Activated naive CD4-positive, alpha-beta T cell treated with anti-CD3 and anti-CD28 coated beads for 36 hours (primary cell): ENCODE measurements at regions of chr7 and their contacts with region 1.

Region 1: GRCh38 chr7:66413379-66414114 is 208.4 kb downstream of the TPST1 start:
- DNase-seq: peak; percentile 83
- H3K4me3 Mint-ChIP-seq: peak overlapping the region; percentile 66
- H3K27ac Mint-ChIP-seq: no peak overlapping the region
- H3K4me1 Mint-ChIP-seq: peaks cover 12% of the 10 kb centered on the region
- H3K27me3 Mint-ChIP-seq: no peaks in the 10 kb centered on the region

Region 2: GRCh38 chr7:65872776-65873581 is 540.6 kb before region 1 on chr7 and contains the start of gene VKORC1L1:
- CTCF ChIA-PET with region 1: no interaction called
- intact Hi-C with region 1: no loop called
- DNase-seq: peak; percentile 95
- H3K4me3 Mint-ChIP-seq: peak within 1 kb of the TSS; percentile 78
- H3K27ac Mint-ChIP-seq: no peak within 1 kb of the TSS
- H3K4me1 Mint-ChIP-seq: peaks cover 6% of the 10 kb centered on the region
- H3K27me3 Mint-ChIP-seq: no peaks in the 10 kb centered on the region
- total RNA-seq, gene VKORC1L1: 8.9 to 10.1 TPM

Region 3: DNA sequence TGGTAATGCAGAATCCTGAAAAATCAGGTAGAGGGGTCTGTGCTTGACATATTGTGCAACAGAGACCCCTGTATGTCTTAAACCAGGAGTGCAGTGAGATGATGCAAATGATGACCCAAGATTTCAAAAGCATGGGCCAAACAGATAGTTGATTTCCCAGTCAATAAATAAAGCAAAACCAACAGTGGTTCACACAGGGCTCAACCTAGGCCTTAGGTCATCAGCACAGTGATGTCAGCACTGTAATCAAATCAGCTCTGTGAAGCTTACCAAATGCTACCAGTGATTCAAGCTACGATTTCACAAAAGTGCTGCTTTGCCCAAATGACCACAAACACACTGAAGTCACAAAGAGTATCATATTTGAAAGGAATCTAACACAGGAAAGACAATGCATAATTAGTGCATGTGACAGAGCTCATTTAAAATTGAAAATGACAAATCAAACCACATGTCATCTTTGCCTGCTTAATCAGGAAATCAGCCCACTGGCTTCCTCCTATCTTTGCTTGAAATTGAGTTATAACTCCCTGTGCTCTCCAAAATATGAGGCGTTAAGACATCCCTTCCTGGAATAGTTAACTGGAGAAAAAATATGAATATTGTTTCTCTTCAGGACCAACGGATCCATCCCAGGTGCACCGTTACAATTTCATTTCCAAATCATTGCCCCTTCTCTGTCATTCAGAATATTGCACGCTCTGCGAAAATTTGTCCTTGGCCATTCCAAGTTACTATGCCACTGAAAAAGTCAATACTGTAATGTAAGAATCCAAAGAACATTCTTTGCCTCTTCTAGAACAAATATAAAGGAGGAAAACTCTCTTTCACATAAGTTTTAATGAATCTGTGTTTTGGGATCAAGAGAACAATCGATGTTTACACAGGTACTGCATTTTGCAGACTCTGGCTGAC is 379.8 kb before region 1 on chr7:
- CTCF ChIA-PET with region 1: no interaction called
- intact Hi-C with region 1: loop called (anchors 5 kb)
- DNase-seq: peak; percentile 18
- H3K4me3 Mint-ChIP-seq: no peak overlapping the region
- H3K27ac Mint-ChIP-seq: no peak overlapping the region
- H3K4me1 Mint-ChIP-seq: peaks cover 6% of the 10 kb centered on the region
- H3K27me3 Mint-ChIP-seq: no peaks in the 10 kb centered on the region

Region 4: DNA sequence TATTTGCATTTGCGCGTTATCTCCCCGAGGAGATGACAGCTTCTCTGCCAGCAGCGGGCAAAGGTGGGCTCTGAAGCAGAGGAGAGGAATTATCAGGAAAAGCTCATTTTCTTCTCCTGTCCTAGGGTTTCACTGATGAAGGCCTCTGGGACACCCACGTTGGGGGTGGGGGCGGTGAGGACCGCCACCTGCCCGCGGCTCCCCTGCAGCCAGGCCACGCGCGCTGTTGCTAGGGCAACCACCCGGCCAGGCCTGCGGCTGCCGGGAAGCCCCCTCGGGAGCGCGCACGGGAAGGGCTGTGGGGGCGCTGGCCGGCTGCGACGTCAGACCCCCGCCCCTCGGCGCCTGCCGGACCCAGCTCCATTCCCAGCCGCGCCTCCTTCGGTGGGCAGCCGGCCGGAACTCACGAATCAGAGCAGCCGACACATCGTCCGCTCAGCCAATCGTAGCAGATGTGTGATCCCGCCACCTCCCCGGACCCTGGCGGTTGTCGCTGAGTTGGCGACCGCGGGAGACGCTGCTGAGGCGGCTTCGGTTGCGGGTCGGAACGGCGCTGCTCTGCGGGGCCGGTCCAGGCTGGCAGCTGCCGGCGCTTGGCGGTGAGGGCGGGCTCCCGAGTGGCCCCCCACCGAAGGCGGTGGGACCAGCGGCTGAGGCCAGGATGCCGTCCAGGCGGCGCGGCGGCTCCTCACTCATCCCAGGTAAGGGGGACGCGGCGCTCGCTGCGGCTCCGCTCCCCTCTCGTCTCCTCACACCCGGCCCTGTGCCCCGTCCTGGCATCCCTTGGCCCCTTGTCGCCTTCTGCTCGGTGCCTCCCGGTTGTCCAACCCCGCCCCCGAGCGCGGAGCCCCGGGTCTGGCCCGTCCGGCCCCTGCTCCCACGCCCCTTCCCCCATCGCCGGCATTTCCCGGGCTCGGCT is 208.5 kb before region 1 on chr7 and contains the start of gene TPST1:
- CTCF ChIA-PET with region 1: interaction called, 6 read pairs
- intact Hi-C with region 1: loop called (anchors 5 kb)
- DNase-seq: peak; percentile 84
- H3K4me3 Mint-ChIP-seq: peak within 1 kb of the TSS; percentile 88
- H3K27ac Mint-ChIP-seq: no peak within 1 kb of the TSS
- H3K4me1 Mint-ChIP-seq: peaks cover 29% of the 10 kb centered on the region
- H3K27me3 Mint-ChIP-seq: peaks cover 13% of the 10 kb centered on the region
- total RNA-seq, gene TPST1: 1.9 to 3.8 TPM

Region 5: DNA sequence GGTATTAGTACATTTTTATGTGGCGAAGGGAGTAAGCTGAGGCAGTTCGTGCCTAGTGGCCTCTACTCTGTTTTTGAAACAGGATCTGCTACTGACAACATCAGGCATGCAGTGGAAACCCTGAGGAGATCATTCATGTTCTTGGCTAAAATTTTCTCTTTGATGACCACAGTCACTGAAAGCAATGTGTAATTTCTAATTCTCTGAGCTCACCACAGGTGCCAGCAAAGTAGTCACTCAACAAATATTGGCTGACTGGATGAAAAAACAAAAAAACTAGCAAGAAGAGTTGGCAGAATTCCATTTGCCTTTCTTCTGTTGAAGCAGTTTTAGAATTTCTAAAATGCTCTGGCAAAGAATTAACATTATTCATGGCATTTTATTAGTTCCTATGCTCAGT is 38.6 kb after region 1 on chr7:
- CTCF ChIA-PET with region 1: no interaction called
- intact Hi-C with region 1: no loop called
- DNase-seq: no peak
- H3K4me3 Mint-ChIP-seq: no peak overlapping the region
- H3K27ac Mint-ChIP-seq: no peak overlapping the region
- H3K4me1 Mint-ChIP-seq: peaks cover 13% of the 10 kb centered on the region
- H3K27me3 Mint-ChIP-seq: no peaks in the 10 kb centered on the region